Panc1 (cell line): ENCODE measurements at regions of chr2 and their contacts with region 1.

Region 1: GRCh38 chr2:230712443-230713330 is at the start of gene CAB39:
- DNase-seq: no peak
- ATAC-seq: peak; percentile 95
- H3K4me3 ChIP-seq: peak within 1 kb of the TSS; percentile 82 to 88
- H3K27ac ChIP-seq: peak within 1 kb of the TSS; percentile 89
- H3K4me1 ChIP-seq: peaks cover 16% of the 10 kb centered on the region
- H3K27me3 ChIP-seq: no peaks in the 10 kb centered on the region
- CTCF ChIP-seq: peak; percentile 97
- total RNA-seq, gene CAB39: 39.9 TPM

Region 2: GRCh38 chr2:229921892-229922445 is 790.7 kb before region 1 on chr2 and contains the start of gene TRIP12:
- CTCF ChIA-PET with region 1: no interaction called
- POLR2A ChIA-PET with region 1: interaction called, 11 read pairs
- in situ Hi-C with region 1: no loop called
- intact Hi-C with region 1: no loop called
- DNase-seq: peak; percentile 84
- ATAC-seq: peak; percentile 91
- H3K4me3 ChIP-seq: peak within 1 kb of the TSS; percentile 91
- H3K27ac ChIP-seq: peak within 1 kb of the TSS; percentile 94
- H3K4me1 ChIP-seq: peaks cover 4% of the 10 kb centered on the region; the same call in 1 of the 2 replicates
- H3K27me3 ChIP-seq: no peaks in the 10 kb centered on the region
- CTCF ChIP-seq: no peak
- total RNA-seq, gene TRIP12: 368 TPM

Region 3: GRCh38 chr2:230684270-230685168 is 28.2 kb before region 1 on chr2:
- CTCF ChIA-PET with region 1: no interaction called
- POLR2A ChIA-PET with region 1: interaction called, 15 read pairs
- in situ Hi-C with region 1: no loop called
- intact Hi-C with region 1: no loop called
- DNase-seq: peak; percentile 64
- ATAC-seq: peak; percentile 83
- H3K4me3 ChIP-seq: no peak overlapping the region
- H3K27ac ChIP-seq: peak overlapping the region; percentile 56
- H3K4me1 ChIP-seq: peaks cover 21% of the 10 kb centered on the region
- H3K27me3 ChIP-seq: no peaks in the 10 kb centered on the region
- CTCF ChIP-seq: no peak

Region 4: GRCh38 chr2:230742781-230743180 is 30.1 kb after region 1 on chr2:
- CTCF ChIA-PET with region 1: no interaction called
- POLR2A ChIA-PET with region 1: interaction called, 11 read pairs
- in situ Hi-C with region 1: no loop called
- intact Hi-C with region 1: no loop called
- DNase-seq: no peak
- ATAC-seq: no peak
- H3K4me3 ChIP-seq: no peak overlapping the region
- H3K27ac ChIP-seq: no peak overlapping the region
- H3K4me1 ChIP-seq: peaks cover 20% of the 10 kb centered on the region
- H3K27me3 ChIP-seq: no peaks in the 10 kb centered on the region
- CTCF ChIP-seq: no peak

Region 5: DNA sequence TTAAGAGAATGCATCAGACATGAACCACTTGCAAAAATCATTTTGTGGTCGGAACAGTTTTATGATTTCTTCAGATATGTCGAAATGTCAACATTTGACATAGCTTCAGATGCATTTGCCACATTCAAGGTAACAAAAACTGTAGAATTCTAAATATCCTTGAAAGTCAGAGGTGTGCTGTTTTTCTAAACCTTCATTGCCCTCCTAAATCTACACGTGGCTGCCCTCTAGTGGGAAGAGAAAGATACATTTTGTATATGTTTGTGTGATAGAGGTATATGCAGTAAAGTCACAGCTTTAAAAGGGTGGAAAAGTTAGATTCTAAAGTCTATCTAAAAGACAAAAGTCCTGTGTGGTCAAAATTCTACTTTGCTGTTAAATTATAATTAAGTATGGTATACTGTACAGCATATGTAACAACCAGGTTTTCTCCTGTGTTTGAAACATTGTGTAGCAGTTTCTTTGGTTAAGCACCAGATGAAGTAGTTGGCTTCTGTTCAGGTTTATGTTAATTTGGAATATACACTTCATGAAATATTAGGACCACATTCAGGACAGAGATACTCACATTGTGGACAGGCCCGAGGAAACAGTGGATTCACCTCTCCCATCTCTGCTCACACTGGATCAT is 86.2 kb after region 1 on chr2:
- CTCF ChIA-PET with region 1: no interaction called
- POLR2A ChIA-PET with region 1: no interaction called
- in situ Hi-C with region 1: no loop called
- intact Hi-C with region 1: loop called (anchors 10 kb)
- DNase-seq: no peak
- ATAC-seq: no peak; the same call in 1 of the 2 replicates
- H3K4me3 ChIP-seq: no peak overlapping the region
- H3K27ac ChIP-seq: no peak overlapping the region
- H3K4me1 ChIP-seq: peaks cover 11% of the 10 kb centered on the region
- H3K27me3 ChIP-seq: no peaks in the 10 kb centered on the region
- CTCF ChIP-seq: peak; percentile 66; the same call in 1 of the 2 replicates

Region 6: GRCh38 chr2:231191896-231192872 is 479.5 kb after region 1 on chr2:
- CTCF ChIA-PET with region 1: no interaction called
- POLR2A ChIA-PET with region 1: no interaction called
- in situ Hi-C with region 1: no loop called
- intact Hi-C with region 1: no loop called
- DNase-seq: no peak
- ATAC-seq: peak; percentile 79
- H3K4me3 ChIP-seq: no peak overlapping the region
- H3K27ac ChIP-seq: no peak overlapping the region; the same call in 1 of the 2 replicates
- H3K4me1 ChIP-seq: no peaks in the 10 kb centered on the region; the same call in 1 of the 2 replicates
- H3K27me3 ChIP-seq: no peaks in the 10 kb centered on the region
- CTCF ChIP-seq: no peak; the same call in 1 of the 2 replicates